ENCODE measurements at regions of chr11 and their contacts with region 1.

Region 1: GRCh38 chr11:76152086-76152681 is 54.1 kb downstream of the WNT11 start:
- DNase-seq: peak; percentile 73
- H3K4me3 Mint-ChIP-seq: peak overlapping the region; percentile 49
- H3K27ac Mint-ChIP-seq: no peak overlapping the region
- H3K4me1 Mint-ChIP-seq: peaks cover 22% of the 10 kb centered on the region
- H3K27me3 Mint-ChIP-seq: peaks cover 6% of the 10 kb centered on the region

Region 2: GRCh38 chr11:75721855-75722668 is 430.1 kb before region 1 on chr11:
- intact Hi-C with region 1: loop called (anchors 2 kb)
- DNase-seq: no peak
- H3K4me3 Mint-ChIP-seq: no peak overlapping the region
- H3K27ac Mint-ChIP-seq: no peak overlapping the region
- H3K4me1 Mint-ChIP-seq: no peaks in the 10 kb centered on the region
- H3K27me3 Mint-ChIP-seq: peaks cover 2% of the 10 kb centered on the region

Region 3: DNA sequence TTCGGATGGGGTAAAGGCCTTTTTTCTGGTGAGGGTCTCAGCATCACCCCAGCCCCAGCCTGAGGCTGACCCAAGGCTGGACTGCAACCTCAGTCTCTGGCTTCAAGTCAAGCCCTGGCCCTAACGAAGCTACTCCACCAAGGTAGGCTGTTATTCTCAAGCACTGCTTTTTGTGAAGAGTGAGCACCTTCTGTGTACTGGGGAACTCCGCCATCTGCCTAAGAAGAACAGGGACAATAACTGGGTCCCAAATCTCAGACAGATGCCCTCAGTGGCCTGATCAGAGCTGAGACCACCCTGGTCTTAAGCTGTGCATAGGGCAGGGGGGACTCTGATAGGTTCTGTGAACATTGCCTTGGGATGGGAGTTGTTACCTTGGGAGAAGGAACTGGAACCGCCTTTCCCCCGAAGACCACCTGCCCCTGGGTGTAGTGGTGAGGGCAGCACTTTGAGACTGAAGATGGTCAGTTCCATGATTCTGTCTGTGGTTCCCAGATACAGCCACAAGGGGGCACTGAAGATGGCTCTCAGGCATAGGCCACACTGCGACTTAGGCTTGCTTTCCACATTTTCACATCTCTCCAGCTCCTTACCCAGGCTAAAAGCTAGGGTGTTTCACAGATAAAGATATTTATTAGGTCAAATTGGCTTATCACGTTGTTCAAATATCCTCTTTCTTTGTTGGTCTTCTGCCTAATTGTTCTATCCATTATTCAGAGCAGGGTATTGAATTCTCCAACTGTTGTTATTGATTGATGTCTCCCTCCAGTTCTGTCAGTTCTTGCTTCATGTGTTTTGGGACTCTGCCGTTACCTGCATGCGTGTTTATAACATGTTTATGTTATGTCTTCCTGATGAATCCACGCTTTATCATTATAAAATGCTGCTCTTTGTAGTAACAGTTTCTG is 349.0 kb before region 1 on chr11:
- intact Hi-C with region 1: loop called (anchors 1 kb)
- DNase-seq: peak; percentile 56
- H3K4me3 Mint-ChIP-seq: no peak overlapping the region
- H3K27ac Mint-ChIP-seq: no peak overlapping the region
- H3K4me1 Mint-ChIP-seq: peaks cover 14% of the 10 kb centered on the region
- H3K27me3 Mint-ChIP-seq: peaks cover 2% of the 10 kb centered on the region

Region 4: DNA sequence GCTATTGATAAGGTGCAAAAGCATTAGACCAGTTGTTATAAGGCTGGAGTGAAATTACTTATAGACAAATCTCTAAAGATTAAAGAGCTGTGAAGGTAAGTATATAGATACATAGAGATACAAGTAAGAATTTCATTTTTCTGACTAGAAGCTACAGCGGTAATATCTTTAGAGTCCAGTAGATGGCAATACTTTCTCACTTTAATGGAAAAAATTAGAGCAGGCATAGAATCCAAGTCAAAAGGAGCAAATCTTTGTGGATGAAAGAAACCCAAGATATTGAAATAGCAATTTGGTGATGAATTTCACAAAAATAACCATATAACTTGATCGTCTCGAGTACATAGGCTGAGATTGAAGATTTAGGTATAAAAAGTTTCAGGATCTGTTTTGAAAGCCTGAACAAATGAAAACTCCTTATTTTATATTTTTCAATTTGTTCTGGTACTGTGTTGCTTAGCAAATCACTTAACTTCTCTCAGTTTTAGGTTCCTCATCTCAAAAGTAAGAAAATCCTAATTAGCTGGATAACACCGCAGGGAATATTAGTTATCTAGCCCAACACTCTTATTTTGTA is 255.3 kb before region 1 on chr11:
- intact Hi-C with region 1: loop called (anchors 1 kb)
- DNase-seq: no peak
- H3K4me3 Mint-ChIP-seq: no peak overlapping the region
- H3K27ac Mint-ChIP-seq: no peak overlapping the region
- H3K4me1 Mint-ChIP-seq: peaks cover 3% of the 10 kb centered on the region
- H3K27me3 Mint-ChIP-seq: no peaks in the 10 kb centered on the region

Region 5: DNA sequence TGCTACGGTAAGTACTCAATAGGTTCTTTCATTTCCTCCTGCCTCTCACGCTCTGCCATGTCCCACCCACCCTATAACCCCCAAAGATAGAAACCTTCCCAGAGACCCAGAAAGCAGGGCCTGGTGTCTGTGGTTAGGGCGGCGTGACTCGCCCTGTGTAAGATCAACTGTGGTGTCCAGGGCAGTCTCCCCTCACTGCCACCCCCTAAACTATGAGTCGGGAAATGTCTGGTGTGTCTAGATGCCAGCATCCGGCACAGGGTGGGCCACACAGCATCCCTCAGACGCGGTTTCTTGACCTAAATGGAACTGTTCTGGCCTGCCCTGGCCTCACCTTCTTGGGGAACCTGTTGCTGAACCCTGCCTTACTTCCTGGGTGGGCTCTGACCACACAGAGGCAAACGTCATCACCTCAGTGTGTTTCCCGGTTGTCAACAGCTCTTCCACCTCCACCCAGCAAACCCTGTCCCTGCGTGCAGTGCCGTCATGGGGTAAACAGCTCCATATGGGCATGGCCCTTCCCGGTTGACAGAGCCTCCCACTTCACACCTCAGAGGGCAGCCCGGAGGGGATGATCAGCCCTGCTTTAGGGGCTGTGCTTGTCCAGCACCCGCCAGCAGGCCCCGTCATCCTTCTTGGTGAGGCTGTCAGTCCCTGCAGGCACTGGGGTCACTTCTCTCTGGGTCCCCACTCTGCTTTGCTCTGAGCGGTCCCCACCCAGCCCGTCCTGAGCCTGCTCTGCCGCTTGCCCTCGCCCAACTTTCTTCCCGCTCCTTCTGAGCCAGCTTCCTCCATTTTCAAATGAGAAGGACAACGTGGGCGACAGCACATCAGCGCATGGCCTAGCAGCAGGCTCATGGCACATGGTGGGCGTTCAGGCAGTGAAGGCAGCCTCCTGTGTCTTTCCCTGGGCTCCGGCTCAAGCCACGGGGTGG is 48.1 kb after region 1 on chr11:
- intact Hi-C with region 1: no loop called
- DNase-seq: no peak
- H3K4me3 Mint-ChIP-seq: no peak overlapping the region
- H3K27ac Mint-ChIP-seq: no peak overlapping the region
- H3K4me1 Mint-ChIP-seq: no peaks in the 10 kb centered on the region
- H3K27me3 Mint-ChIP-seq: peaks cover 22% of the 10 kb centered on the region